Activated T-helper 2 cell treated with anti-CD3 and anti-CD28 coated beads, Interferon-gamma antibody, Interleukin-2, Interleukin-4, amounts not matched to agents 10 μg/mL and 5 μg/mL and 100 μg/mL, durations not matched to agents 14 hours and 24 hours and 36 hours (primary cell): ENCODE measurements at regions of chrX and their contacts with region 1.

Region 1: DNA sequence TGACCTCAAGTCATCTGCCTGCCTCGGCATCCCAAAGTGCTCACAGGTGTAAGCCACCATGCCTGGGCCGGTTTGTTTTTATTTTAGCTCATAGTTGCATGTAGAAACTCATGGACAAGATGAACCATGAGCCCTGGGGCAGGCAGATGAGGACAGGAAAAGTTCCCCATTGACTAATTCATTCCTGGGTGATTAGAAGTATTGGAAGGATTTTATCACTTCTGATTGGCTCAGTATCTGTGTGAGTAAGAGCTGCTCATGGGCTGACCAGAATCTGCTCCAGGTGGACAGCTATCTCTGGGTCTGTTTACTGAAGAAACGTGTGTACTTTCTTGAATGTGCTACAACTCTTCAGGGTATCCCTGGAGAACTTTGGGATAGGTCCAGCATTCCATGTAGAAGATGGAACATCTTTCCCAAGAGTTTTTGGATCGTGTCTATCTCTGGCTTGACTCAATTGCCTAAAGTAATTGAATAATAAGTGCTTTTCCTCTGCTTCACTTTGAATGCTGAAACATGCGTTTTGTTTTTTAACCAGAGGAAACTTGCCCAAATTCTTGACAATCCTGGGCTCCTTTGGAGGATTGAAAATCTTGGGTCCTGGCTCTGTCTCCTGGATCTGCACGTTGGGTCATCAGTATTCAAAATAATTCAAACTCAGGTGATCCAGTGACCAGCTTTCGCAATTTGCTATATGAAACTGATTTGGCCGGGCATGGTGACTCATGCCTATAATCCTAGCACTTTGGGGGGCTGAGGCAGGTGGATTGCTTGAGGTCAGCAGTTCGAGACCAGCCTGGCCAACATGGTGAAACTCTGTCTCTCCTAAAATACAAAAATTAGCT is 88.6 kb upstream of the DHRSX start:
- DNase-seq: no peak
- H3K4me3 Mint-ChIP-seq: no peak overlapping the region
- H3K27ac Mint-ChIP-seq: no peak overlapping the region
- H3K4me1 Mint-ChIP-seq: peaks cover 4% of the 10 kb centered on the region
- H3K27me3 Mint-ChIP-seq: peaks cover 13% of the 10 kb centered on the region

Region 2: GRCh38 chrX:1649621-1650020 is 939.8 kb before region 1 on chrX:
- intact Hi-C with region 1: loop called (anchors 5 kb)
- DNase-seq: no peak
- H3K4me3 Mint-ChIP-seq: no peak overlapping the region
- H3K27ac Mint-ChIP-seq: no peak overlapping the region
- H3K4me1 Mint-ChIP-seq: peaks cover 4% of the 10 kb centered on the region
- H3K27me3 Mint-ChIP-seq: no peaks in the 10 kb centered on the region

Region 3: DNA sequence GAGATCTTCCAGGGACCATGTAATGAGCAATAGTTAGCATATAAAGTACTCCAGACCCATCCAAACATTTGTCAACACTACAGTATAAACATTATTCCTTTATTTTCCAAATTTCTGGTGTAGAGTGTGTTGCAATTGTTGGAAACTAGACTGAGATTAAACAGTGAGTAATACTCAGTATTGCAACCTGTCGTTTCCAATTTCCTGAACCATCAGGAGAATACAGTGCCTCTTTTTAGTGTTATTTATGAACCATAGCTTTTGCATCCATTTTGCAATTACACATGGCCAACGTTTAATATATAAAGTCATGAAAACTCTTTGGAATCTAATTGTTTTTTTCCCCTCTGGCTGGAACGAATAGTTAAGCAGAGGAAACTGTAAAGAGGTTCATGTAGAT is 30.3 kb before region 1 on chrX:
- intact Hi-C with region 1: no loop called
- DNase-seq: no peak
- H3K4me3 Mint-ChIP-seq: no peak overlapping the region
- H3K27ac Mint-ChIP-seq: no peak overlapping the region
- H3K4me1 Mint-ChIP-seq: no peaks in the 10 kb centered on the region
- H3K27me3 Mint-ChIP-seq: no peaks in the 10 kb centered on the region

Region 4: DNA sequence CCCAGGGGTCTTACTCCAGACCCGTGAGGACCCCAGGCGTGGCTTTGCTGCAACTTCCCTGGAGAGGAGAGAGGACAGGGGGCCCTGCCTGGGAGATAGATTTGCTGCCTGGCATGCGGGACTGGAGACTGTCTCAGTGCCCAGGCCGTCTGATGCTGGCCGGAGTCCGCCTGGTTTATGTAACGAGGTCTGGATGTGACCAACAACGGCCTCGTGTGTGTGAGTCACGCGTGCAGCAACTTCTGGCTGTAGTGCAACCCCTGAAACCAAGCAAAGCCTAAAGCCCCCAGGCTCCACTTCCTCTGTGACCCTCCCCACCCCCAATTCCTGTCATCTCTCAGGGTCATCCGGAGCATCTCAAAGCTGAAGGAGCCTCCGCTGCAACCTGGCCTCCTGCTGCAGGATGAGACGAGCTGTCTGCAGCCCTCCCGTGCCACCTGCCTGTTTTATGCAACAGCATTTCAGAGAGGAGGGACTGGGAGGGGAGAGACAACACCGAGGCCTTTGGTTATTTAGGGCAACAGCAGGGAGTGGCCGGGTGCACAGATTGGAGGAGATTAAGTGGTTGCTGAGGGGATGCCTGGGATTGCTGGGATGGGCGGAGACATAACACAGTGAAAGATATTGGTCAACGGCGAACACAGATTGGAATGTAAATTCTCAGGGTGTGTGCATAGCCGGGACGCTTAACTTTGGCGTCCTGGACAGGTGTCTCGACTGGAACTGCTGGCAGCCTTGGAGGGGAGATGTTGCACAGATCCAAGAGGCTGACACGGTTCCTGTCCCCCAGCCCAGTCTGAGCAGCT is 178.4 kb after region 1 on chrX:
- intact Hi-C with region 1: no loop called
- DNase-seq: no peak
- H3K4me3 Mint-ChIP-seq: no peak overlapping the region
- H3K27ac Mint-ChIP-seq: no peak overlapping the region
- H3K4me1 Mint-ChIP-seq: no peaks in the 10 kb centered on the region
- H3K27me3 Mint-ChIP-seq: peaks cover 7% of the 10 kb centered on the region